ENCODE measurements at regions of chr1 and their contacts with region 1.

Region 1: GRCh38 chr1:210342986-210343780 is 14.5 kb downstream of the HHAT start:
- DNase-seq: peak; percentile 62
- ATAC-seq: peak; percentile 90
- H3K4me3 Mint-ChIP-seq: no peak overlapping the region
- H3K27ac Mint-ChIP-seq: no peak overlapping the region
- H3K4me1 Mint-ChIP-seq: peaks cover 34% of the 10 kb centered on the region
- H3K27me3 Mint-ChIP-seq: no peaks in the 10 kb centered on the region
- CTCF ChIP-seq: no peak

Region 2: GRCh38 chr1:210143465-210144062 is 199.6 kb before region 1 on chr1:
- CTCF ChIA-PET with region 1: no interaction called
- POLR2A ChIA-PET with region 1: interaction called, 10 read pairs
- intact Hi-C with region 1: no loop called
- DNase-seq: peak; percentile 16
- ATAC-seq: no peak
- H3K4me3 Mint-ChIP-seq: no peak overlapping the region
- H3K27ac Mint-ChIP-seq: no peak overlapping the region
- H3K4me1 Mint-ChIP-seq: no peaks in the 10 kb centered on the region
- H3K27me3 Mint-ChIP-seq: peaks cover 18% of the 10 kb centered on the region
- CTCF ChIP-seq: no peak

Region 3: DNA sequence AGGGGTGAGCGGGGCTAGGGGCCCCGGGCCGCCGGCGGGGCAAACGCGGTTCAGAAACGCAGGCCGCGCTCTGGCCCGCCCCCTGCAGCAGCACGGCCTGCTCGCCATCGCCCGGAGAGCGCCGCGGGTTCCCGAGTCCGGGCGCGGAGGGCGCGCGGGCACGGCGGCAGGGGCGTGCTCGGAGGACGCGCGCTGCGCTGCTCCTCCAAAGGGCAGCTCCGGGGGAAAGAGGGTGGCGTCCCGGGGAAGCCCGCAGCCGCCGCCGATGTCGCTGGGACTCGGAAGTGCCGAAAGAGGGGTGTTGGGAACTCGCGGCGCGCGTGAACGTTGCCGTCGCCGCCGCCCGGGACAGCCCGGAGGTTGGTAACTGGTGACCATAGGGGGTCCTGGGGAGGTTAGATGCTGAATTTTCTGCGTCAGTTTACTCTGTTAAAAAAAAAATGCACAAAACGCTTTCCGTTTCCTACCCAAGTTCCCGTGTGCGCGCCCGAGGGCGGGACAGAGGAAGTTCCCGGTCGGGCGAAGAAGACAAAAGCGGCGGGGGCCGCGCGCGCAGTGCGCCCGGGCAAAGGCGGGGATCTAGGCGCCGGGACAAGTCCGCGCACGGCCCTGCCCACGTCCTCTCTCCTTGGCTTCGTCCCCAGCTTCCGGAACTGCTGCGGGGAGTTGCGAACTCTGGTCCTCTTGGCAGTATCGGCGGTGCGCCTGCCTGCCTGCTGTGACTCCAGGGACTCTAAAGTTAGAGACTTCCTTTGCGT is 14.3 kb before region 1 on chr1 and contains the start of gene HHAT:
- CTCF ChIA-PET with region 1: interaction called, 3 read pairs
- POLR2A ChIA-PET with region 1: interaction called, 118 read pairs
- intact Hi-C with region 1: loop called (anchors 1 kb)
- DNase-seq: peak; percentile 73
- ATAC-seq: peak; percentile 80
- H3K4me3 Mint-ChIP-seq: peak within 1 kb of the TSS; percentile 97
- H3K27ac Mint-ChIP-seq: peak within 1 kb of the TSS; percentile 96
- H3K4me1 Mint-ChIP-seq: peaks cover 43% of the 10 kb centered on the region
- H3K27me3 Mint-ChIP-seq: peaks cover 6% of the 10 kb centered on the region
- CTCF ChIP-seq: no peak
- total RNA-seq, gene HHAT: 6.1 and 8.5 TPM in 2 replicates

Region 4: GRCh38 chr1:210360852-210361477 is 17.8 kb after region 1 on chr1:
- CTCF ChIA-PET with region 1: interaction called, 5 read pairs
- POLR2A ChIA-PET with region 1: interaction called, 8 read pairs
- intact Hi-C with region 1: loop called (anchors 2 kb)
- DNase-seq: no peak
- ATAC-seq: peak; percentile 62
- H3K4me3 Mint-ChIP-seq: no peak overlapping the region
- H3K27ac Mint-ChIP-seq: no peak overlapping the region
- H3K4me1 Mint-ChIP-seq: no peaks in the 10 kb centered on the region
- H3K27me3 Mint-ChIP-seq: no peaks in the 10 kb centered on the region
- CTCF ChIP-seq: no peak

Region 5: DNA sequence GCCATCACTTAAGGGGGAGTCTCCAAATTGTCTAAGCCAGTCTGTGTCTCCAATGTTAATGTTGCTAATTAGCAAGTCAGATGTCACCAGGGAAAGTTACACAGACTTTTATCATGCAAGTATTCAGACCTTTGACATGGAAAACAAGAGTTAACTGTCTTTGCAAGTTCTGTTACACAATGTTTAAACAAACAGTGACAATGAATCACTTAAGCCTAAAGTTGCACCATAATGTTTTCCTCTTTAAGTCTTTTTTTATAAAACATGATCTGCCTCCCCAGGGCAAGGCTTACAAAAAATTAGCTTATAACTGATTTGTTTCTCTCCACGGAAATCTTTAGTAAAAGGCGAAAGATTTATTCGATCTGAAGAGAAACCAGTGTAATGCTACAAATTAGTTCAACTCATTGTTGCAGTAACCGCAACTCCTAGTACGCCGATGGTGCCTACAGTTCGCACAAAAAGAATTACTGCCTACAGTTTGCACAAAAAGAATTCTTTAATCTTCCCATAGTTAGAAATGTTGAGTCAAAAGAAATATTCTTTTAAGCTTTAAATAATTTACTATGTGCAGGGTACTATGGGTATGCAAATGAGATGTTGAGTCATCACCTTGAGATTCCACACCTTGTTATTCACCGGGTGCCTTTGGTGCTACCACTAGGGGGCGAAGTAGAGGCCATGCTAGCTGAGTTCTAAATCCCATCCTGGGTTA is 30.9 kb after region 1 on chr1:
- CTCF ChIA-PET with region 1: interaction called, 3 read pairs
- POLR2A ChIA-PET with region 1: interaction called, 13 read pairs
- intact Hi-C with region 1: loop called (anchors 1 kb)
- DNase-seq: no peak
- ATAC-seq: peak; percentile 70
- H3K4me3 Mint-ChIP-seq: no peak overlapping the region
- H3K27ac Mint-ChIP-seq: peak overlapping the region; percentile 22
- H3K4me1 Mint-ChIP-seq: peaks cover 5% of the 10 kb centered on the region
- H3K27me3 Mint-ChIP-seq: no peaks in the 10 kb centered on the region
- CTCF ChIP-seq: no peak

Region 6: DNA sequence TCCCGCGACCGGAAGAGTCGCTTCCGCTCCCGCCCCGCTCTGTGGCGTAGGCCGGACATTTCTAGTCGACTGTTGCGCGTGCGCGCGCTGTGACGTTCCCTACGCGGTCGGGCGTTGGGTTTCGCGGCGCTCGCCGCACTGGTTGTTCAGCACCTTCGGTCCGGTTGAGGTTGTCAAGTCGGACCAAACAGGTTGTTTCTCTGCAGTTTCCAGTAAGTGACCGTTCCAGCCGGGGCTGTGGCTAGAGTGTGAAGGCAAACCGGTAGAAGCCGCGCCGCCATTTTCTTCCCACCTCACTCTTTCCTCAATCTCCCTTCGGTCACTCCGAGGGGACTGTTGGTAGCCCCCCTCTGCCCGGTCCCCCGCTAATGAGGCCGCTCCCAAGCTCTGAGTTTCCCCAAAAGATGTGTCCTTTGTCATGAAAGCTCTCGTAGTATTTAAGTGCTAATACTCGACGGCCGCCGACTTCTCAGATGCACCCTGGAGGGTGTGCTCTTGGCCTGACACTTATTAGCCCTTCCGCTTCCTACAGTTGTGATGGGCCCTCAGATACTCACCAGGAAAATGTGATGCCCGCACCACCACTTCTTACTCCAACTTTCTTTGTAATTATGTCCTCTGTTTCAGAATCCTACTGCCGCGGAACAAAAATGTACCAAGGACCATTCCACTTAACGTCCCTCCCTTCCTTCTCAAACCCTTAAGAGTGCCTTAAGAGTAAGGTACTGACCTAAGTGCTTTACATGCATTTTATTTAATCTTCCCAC is 1039.7 kb after region 1 on chr1:
- CTCF ChIA-PET with region 1: no interaction called
- POLR2A ChIA-PET with region 1: no interaction called
- intact Hi-C with region 1: loop called (anchors 5 kb)
- DNase-seq: peak; percentile 86
- ATAC-seq: peak; percentile 96
- H3K4me3 Mint-ChIP-seq: peak overlapping the region; percentile 93
- H3K27ac Mint-ChIP-seq: peak overlapping the region; percentile 98
- H3K4me1 Mint-ChIP-seq: peaks cover 20% of the 10 kb centered on the region
- H3K27me3 Mint-ChIP-seq: no peaks in the 10 kb centered on the region
- CTCF ChIP-seq: no peak

Measured in activated B cell treated with CpG ODN at 0.5 μM for 24 hours (primary cell).